Left cardiac atrium (tissue), 4 donors: ENCODE measurements at regions of chr21 and their contacts with region 1.

Region 1: GRCh38 chr21:32412162-32413014 is at the start of gene EVA1C:
- DNase-seq: peak; percentile 85
- ATAC-seq: peak; percentile 71 to 80
- total RNA-seq, gene EVA1C: 22.1 to 52.8 TPM

Region 2: DNA sequence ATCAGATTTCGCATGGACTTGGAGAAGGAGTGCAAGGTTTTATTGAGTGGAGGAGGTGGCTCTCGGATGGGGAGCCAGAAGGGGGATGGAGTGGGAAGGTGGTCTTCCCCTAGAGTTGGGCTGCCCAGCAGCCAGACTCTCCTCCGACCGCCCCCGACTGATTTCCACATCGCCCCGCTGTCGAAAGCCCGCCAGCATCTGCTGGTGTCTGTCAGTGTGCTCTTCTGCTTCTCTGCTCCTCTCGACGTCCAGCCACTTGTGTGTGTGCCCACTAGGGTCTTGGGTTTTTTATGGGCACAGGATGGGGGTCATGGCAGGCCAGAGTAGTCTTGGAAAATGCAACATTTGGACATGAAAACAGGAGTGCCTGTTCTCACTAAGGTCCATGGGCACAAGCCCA is 40.3 kb after region 1 on chr21:
- intact Hi-C with region 1: loop called in 1 of 2 experiments (anchors 5 kb)
- DNase-seq: no peak
- ATAC-seq: no peak

Region 3: DNA sequence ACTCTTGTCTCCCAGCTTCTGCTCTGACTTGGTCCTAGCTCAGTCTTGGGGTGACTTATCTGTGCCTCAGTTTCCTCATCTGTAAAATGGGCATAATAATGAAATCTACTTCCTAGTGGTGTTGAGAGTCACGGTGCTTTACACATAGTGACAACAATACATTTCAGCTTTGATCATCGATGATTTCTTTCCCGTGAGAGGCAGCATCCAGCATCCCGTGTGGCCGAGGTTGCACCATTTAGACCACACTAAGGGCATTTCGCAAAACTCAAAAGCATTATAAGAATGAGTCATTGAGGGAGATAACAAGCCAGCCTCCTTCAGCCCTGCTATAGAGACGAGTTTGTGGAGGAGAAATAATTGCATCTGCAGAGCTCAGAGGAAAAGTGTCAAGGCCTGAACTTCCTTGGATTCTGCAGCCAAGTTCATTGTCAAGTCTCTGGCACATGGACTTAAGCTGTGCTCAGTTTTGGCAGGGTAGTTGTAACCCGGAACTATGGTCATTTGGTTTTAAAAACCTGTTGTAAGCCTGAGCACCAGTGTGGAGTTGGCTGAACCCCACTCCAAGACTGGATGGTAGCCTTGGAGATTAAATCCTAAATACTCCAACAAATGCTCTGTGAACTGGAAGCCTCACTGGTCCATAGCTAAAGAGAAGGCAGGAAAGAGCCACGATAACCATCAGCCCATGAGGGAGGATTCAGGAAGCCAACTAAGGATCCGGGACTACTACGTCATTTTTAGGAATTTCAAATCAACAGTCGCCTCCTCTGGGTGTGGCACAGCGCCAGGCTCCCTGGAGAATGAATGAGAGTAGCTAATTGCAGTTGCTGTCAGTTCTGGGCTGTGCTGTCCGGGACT is 108.7 kb after region 1 on chr21:
- intact Hi-C with region 1: loop called in 1 of 2 experiments (anchors 2 kb)
- DNase-seq: peak; percentile 95
- ATAC-seq: peak; percentile 64 to 81